Gastrocnemius medialis (tissue), 4 donors: ENCODE measurements at regions of chr16 and their contacts with region 1.

Region 1: DNA sequence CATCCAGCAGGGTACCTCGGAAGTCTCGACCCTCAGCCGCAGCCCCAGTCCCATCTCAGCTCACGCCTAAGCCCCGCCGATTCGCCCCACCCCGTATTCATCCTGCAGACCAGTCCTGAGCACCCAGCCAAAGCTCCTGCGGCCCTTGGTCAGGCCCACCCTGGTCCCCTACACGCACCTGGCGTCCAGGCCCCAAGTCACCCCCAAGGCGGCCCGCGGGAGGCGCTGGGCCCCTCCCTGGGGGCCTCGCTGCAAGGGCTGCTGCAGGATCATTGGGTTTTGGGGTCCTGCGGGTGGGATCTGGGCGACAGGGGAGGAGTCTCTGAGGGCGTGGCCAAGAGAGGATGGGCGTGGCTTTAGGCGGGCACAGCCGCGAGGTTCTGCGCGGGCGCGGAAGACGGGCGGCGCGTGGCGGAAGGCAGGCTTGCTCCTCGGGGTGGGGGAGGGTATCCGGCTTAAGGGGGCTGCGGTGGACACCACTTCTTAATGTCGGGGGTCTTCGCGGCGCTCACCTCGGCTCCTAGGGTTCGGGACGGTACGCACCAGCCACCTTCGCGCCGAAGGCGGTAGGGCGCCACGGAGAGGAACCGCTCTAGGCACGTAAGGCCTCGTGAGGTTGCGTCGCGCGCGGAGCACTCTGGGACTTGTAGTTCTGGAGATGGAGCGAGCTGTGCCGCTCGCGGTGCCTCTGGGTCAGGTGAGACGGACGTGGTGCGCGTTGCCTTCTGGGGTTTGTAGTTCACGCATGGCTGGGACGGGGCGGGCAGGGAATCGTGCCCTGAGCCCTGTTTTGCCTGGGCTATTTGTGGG is at the starts of genes HCFC1R1 and THOC6:
- DNase-seq: peak; percentile 96 to 97
- ATAC-seq: peak; percentile 46 to 60
- H3K4me3 ChIP-seq: peak within 1 kb of the TSS; percentile 71 to 99 (median 82)
- H3K27ac ChIP-seq: peak within 1 kb of the TSS; percentile 96 to 100 (median 98)
- H3K4me1 ChIP-seq: peaks cover 32 to 62% of the 10 kb centered on the region in 2 donors
- H3K27me3 ChIP-seq: peaks cover 1 to 8% (median 2%) of the 10 kb centered on the region in 3 donors
- CTCF ChIP-seq: no peak
- POLR2A ChIP-seq: peak; percentile 81 to 83
- total RNA-seq, gene HCFC1R1: 41.8 to 124 (median 66.9) TPM
- total RNA-seq, gene THOC6: 15.0 to 31.1 (median 21.5) TPM

Region 2: GRCh38 chr16:2047330-2048115 is 976.4 kb before region 1 on chr16 and contains the starts of genes NTHL1 and TSC2:
- in situ Hi-C with region 1: no loop called
- intact Hi-C with region 1: loop called (anchors 5 kb)
- DNase-seq: peak; percentile 93 to 94
- ATAC-seq: peak; percentile 98 to 99
- H3K4me3 ChIP-seq: peak within 1 kb of the TSS; percentile 71 to 91 (median 86)
- H3K27ac ChIP-seq: peak within 1 kb of the TSS; percentile 70 to 88 (median 78)
- H3K4me1 ChIP-seq: peaks cover 19 to 30% of the 10 kb centered on the region in 2 donors
- H3K27me3 ChIP-seq: no peaks in the 10 kb centered on the region
- CTCF ChIP-seq: peak in 4 of 5 experiments; percentile 39 to 70 (median 49)
- POLR2A ChIP-seq: peak in 1 of 2 donors; percentile 45
- total RNA-seq, gene NTHL1: 3.5 to 13.6 (median 6.4) TPM
- total RNA-seq, gene TSC2: 44.5 to 62.7 (median 53.8) TPM

Region 3: GRCh38 chr16:2905431-2906387 is 118.2 kb before region 1 on chr16:
- in situ Hi-C with region 1: no loop called
- intact Hi-C with region 1: loop called (anchors 1 kb)
- DNase-seq: peak; percentile 100
- ATAC-seq: peak; percentile 83 to 88
- H3K4me3 ChIP-seq: peak overlapping the region; percentile 77 to 91 (median 87)
- H3K27ac ChIP-seq: peak overlapping the region; percentile 91 to 96 (median 94)
- H3K4me1 ChIP-seq: peaks cover 11 to 14% of the 10 kb centered on the region in 2 donors
- H3K27me3 ChIP-seq: no peaks in the 10 kb centered on the region
- CTCF ChIP-seq: no peak
- POLR2A ChIP-seq: no peak

Region 4: DNA sequence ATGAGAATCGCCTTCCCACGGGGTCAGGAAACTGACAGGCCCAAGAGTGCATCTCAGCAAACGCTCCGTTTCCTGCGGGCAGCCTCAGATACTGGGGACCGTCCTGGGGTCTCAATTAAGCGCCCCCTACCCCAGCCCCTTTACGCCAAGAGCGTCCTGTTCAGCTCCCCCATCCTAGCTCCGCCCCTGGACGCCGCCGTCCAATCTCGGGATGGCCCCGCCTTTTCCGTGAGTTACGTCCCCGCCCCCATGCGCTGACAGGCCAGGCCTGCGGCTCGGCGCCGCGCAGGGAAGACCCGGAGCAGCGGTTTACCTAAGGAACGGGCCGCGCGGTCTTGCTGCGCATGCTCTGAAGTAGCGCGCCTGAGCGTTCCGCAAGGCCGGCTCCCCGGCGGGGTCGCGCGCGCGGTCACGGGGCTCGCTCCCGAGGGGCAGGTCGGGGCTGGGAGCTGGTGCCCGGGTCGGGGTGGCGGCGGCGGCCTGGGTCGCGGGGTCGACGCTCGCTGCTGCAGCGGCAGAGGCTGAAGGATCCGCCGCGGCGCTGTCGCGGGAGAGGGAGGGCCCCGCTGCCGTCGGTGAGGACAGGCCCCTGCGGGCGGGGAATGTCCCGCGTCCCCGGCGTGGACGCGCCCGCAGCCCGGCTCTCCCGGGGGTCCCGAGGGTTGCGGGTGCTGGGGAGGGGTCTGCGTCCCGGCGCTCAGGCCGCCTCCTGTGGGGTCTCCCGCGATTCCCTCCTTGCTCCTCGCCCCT is 112.1 kb before region 1 on chr16 and contains the start of gene FLYWCH1:
- in situ Hi-C with region 1: no loop called
- intact Hi-C with region 1: loop called (anchors 2 kb)
- DNase-seq: peak; percentile 97 to 98
- ATAC-seq: peak; percentile 90 to 95
- H3K4me3 ChIP-seq: peak within 1 kb of the TSS; percentile 70 to 91 (median 83)
- H3K27ac ChIP-seq: peak within 1 kb of the TSS; percentile 89 to 97 (median 91)
- H3K4me1 ChIP-seq: peaks cover 13 to 15% of the 10 kb centered on the region in 2 donors
- H3K27me3 ChIP-seq: no peaks in the 10 kb centered on the region
- CTCF ChIP-seq: peak in 1 of 5 experiments; percentile 29
- POLR2A ChIP-seq: peak; percentile 89 to 91
- total RNA-seq, gene FLYWCH1: 41.7 to 49.7 (median 44.0) TPM

Region 5: GRCh38 chr16:3003582-3004302 is 20.1 kb before region 1 on chr16:
- in situ Hi-C with region 1: no loop called
- intact Hi-C with region 1: loop called (anchors 1 kb)
- DNase-seq: peak; percentile 97 to 98
- ATAC-seq: peak; percentile 98 to 99
- H3K4me3 ChIP-seq: peak overlapping the region in 3 of 4 donors; percentile 27 to 33 (median 28)
- H3K27ac ChIP-seq: peak overlapping the region in 3 of 4 donors; percentile 46 to 58 (median 49)
- H3K4me1 ChIP-seq: peaks cover 4 to 6% of the 10 kb centered on the region in 2 donors
- H3K27me3 ChIP-seq: peaks cover 0 to 2% (median 0%) of the 10 kb centered on the region in 3 donors
- CTCF ChIP-seq: peak; percentile 22 to 69 (median 63)
- POLR2A ChIP-seq: peak; percentile 88 to 89

Region 6: DNA sequence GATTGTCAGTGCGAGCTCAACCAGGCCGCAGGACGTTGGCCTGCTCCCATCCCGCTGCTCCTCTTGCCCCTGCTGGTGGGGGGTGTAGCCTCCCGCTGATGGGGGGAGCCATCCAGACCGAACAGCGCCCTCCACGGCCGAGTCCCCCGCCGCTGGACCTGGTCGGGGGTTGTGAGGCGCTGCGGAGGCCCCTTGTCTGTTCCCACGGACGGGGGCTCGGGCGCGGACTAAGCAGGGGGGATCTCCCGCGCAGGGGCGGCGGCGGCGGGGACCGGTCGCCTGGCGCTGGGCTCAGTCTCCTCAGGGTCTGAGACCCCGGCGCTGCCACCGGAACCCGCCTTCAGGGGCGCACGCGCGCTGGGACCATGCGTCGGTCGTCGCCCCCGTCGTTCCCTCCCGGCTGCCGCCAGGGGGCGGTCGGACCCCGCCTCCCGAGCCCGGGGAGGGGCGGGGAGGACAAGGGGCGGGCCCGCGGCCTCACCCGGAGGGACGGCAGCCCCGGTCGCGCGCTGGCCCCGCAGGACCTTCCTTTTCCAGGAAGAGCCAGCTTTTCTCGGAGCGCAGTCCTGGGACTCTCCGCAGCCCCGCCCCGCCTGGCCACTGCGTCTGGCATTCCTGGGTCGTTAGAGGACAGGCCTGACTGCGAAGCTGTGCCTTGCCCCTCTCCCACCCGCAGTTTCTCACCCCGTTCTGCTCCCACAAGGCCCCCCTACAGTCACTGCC is 35.3 kb after region 1 on chr16:
- in situ Hi-C with region 1: no loop called
- intact Hi-C with region 1: loop called (anchors 2 kb)
- DNase-seq: peak; percentile 67 to 82
- ATAC-seq: peak; percentile 83 to 89
- H3K4me3 ChIP-seq: peak overlapping the region; percentile 79 to 98 (median 92)
- H3K27ac ChIP-seq: peak overlapping the region; percentile 79 to 85 (median 83)
- H3K4me1 ChIP-seq: peaks cover 28 to 39% of the 10 kb centered on the region in 2 donors
- H3K27me3 ChIP-seq: no peaks in the 10 kb centered on the region
- CTCF ChIP-seq: peak; percentile 81 to 99 (median 99)
- POLR2A ChIP-seq: peak in 1 of 2 donors; percentile 17